Natural killer cell (primary cell): ENCODE measurements at regions of chr1 and their contacts with region 1.

Region 1: DNA sequence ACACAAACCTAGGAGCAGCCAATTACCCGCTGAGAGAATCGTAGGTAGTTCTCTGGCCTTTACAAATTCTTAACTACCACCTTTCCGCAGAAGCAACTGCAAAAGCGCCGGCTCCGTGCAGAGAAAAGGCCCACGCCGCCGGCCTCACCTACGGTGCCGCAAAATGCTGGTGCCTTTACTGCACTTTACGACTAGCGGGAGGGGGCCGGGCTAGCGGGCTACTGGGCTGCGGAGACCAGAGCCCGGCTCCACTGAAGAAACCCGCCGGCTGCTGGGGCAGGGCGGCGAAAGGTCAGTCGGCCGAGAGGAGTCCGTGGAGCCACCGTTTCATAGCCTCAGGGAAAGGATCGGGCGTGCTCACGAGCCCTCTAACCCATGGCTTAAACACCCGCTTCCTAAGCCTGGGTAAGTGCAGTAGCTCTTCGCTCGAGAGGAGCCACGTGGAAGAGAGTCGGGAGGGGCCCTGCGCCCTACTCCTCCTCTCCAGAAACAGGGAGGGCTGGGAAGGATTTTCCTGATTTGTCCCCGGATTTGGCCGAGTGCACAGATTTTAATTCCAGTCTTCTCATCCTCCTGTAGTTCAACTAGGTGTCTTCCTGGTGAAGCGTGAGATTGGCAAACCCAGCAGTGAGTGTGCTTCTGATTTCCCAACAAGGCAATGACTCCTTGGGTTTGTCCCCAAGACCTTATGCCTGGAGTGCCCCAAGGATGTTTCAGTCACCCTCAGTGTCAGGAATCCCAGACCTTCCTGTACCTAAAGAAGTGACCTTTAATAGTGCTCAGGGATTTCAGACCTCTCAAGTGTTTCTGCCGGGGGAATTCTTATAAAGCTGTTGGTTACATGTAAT is at the start of gene DPH5:
- DNase-seq: peak; percentile 80 to 90
- ATAC-seq: peak; percentile 98 to 100 (median 99)
- H3K4me3 ChIP-seq: peak within 1 kb of the TSS; percentile 66
- H3K4me3 Mint-ChIP-seq: peak within 1 kb of the TSS; percentile 75
- H3K27ac ChIP-seq: peak within 1 kb of the TSS; percentile 61
- H3K27ac Mint-ChIP-seq: peak within 1 kb of the TSS; percentile 90 to 94
- H3K4me1 ChIP-seq: peaks cover 9% of the 10 kb centered on the region
- H3K4me1 Mint-ChIP-seq: peaks cover 32 to 42% of the 10 kb centered on the region in 2 donors
- H3K27me3 ChIP-seq: no peaks in the 10 kb centered on the region
- H3K27me3 Mint-ChIP-seq: no peaks in the 10 kb centered on the region
- CTCF ChIP-seq: no peak
- total RNA-seq, gene DPH5: 17.1 to 22.9 (median 19.9) TPM

Region 2: GRCh38 chr1:99943223-99943794 is 1082.6 kb before region 1 on chr1:
- intact Hi-C with region 1: no loop called
- DNase-seq: no peak
- ATAC-seq: no peak
- H3K4me3 ChIP-seq: no peak overlapping the region
- H3K4me3 Mint-ChIP-seq: no peak overlapping the region
- H3K27ac ChIP-seq: no peak overlapping the region
- H3K27ac Mint-ChIP-seq: no peak overlapping the region
- H3K4me1 ChIP-seq: no peaks in the 10 kb centered on the region
- H3K4me1 Mint-ChIP-seq: no peaks in the 10 kb centered on the region
- H3K27me3 ChIP-seq: no peaks in the 10 kb centered on the region
- H3K27me3 Mint-ChIP-seq: peaks cover 0 to 3% of the 10 kb centered on the region in 2 donors
- CTCF ChIP-seq: no peak

Region 3: DNA sequence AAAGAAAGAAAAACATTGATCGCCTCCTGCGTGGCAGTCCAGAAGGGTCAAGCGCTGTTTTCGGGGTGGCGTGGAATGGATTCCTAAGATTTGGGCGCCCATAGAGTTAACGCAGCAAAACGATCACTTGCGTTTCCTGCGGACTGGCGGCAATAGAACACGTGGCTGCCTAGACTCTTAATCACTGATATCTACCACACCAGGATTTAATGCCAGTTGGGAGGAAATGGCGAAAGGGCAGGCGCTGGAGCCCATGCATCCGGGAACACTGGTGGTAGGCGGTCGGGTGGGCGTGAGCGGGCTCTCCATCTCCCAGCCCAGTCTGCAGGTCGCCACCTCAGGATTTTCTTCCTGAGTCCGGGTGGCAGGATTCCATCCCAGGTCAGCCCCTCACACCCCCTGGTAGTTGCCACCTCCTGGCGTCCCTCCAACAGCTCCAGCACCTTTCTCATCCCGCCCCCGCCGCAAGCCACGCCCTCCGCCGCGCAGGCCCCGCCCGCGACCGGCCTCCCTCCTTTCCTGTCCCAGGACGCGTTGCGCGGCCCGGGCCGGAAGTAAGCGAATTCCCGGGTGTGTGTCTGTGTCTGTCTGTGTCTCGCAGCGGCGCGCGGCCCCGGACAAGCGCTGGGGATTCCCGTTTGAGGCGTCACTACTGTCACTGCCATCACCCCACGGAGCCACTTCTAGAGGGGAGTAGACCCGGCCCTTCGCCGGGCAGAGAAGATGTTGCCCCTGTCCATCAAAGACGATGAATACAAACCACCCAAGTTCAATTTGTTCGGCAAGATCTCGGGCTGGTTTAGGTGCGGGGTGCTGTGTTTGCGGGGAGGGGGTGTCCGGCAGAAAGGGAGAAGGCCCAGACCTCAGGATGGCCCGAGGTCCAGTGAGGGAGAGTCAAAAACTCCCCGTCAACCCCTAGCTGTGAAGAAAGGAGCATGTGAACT is 130.1 kb before region 1 on chr1 and contains the start of gene SLC30A7:
- intact Hi-C with region 1: loop called (anchors 5 kb)
- DNase-seq: peak; percentile 95 to 97
- ATAC-seq: peak; percentile 81 to 94 (median 86)
- H3K4me3 ChIP-seq: peak within 1 kb of the TSS; percentile 97
- H3K4me3 Mint-ChIP-seq: peak within 1 kb of the TSS; percentile 99
- H3K27ac ChIP-seq: peak within 1 kb of the TSS; percentile 99
- H3K27ac Mint-ChIP-seq: peak within 1 kb of the TSS; percentile 100
- H3K4me1 ChIP-seq: peaks cover 8% of the 10 kb centered on the region
- H3K4me1 Mint-ChIP-seq: peaks cover 40 to 46% of the 10 kb centered on the region in 2 donors
- H3K27me3 ChIP-seq: no peaks in the 10 kb centered on the region
- H3K27me3 Mint-ChIP-seq: no peaks in the 10 kb centered on the region
- CTCF ChIP-seq: no peak
- total RNA-seq, gene SLC30A7: 27.7 to 38.8 (median 36.2) TPM

Region 4: GRCh38 chr1:100928128-100928527 is 97.8 kb before region 1 on chr1:
- intact Hi-C with region 1: loop called (anchors 5 kb)
- DNase-seq: peak in 1 of 2 donors; percentile 63
- ATAC-seq: peak; percentile 45 to 56 (median 55)
- H3K4me3 ChIP-seq: no peak overlapping the region
- H3K4me3 Mint-ChIP-seq: no peak overlapping the region
- H3K27ac ChIP-seq: peak overlapping the region; percentile 72
- H3K27ac Mint-ChIP-seq: no peak overlapping the region
- H3K4me1 ChIP-seq: peaks cover 21% of the 10 kb centered on the region
- H3K4me1 Mint-ChIP-seq: peaks cover 30 to 40% of the 10 kb centered on the region in 2 donors
- H3K27me3 ChIP-seq: no peaks in the 10 kb centered on the region
- H3K27me3 Mint-ChIP-seq: no peaks in the 10 kb centered on the region
- CTCF ChIP-seq: no peak

Region 5: GRCh38 chr1:101356604-101357443 is 330.9 kb after region 1 on chr1:
- intact Hi-C with region 1: no loop called
- DNase-seq: no peak
- ATAC-seq: peak in 1 of 3 donors; percentile 28
- H3K4me3 ChIP-seq: no peak overlapping the region
- H3K4me3 Mint-ChIP-seq: peak overlapping the region; percentile 25
- H3K27ac ChIP-seq: no peak overlapping the region
- H3K27ac Mint-ChIP-seq: peak overlapping the region; percentile 83 to 86
- H3K4me1 ChIP-seq: no peaks in the 10 kb centered on the region
- H3K4me1 Mint-ChIP-seq: peaks cover 26 to 32% of the 10 kb centered on the region in 2 donors
- H3K27me3 ChIP-seq: no peaks in the 10 kb centered on the region
- H3K27me3 Mint-ChIP-seq: no peaks in the 10 kb centered on the region
- CTCF ChIP-seq: no peak